GM23248 (cell line): ENCODE measurements at regions of chr5 and their contacts with region 1.

Region 1: GRCh38 chr5:31232273-31232888 is 38.9 kb downstream of the CDH6 start:
- DNase-seq: peak; percentile 83
- H3K4me3 ChIP-seq: no peak overlapping the region
- H3K27ac ChIP-seq: no peak overlapping the region
- H3K4me1 ChIP-seq: peaks cover 13% of the 10 kb centered on the region
- H3K27me3 ChIP-seq: no peaks in the 10 kb centered on the region

Region 2: GRCh38 chr5:30040488-30041118 is 1191.8 kb before region 1 on chr5:
- in situ Hi-C with region 1: loop called (anchors 25 kb)
- DNase-seq: peak; percentile 52
- H3K4me3 ChIP-seq: no peak overlapping the region
- H3K27ac ChIP-seq: no peak overlapping the region
- H3K4me1 ChIP-seq: no peaks in the 10 kb centered on the region
- H3K27me3 ChIP-seq: no peaks in the 10 kb centered on the region

Region 3: DNA sequence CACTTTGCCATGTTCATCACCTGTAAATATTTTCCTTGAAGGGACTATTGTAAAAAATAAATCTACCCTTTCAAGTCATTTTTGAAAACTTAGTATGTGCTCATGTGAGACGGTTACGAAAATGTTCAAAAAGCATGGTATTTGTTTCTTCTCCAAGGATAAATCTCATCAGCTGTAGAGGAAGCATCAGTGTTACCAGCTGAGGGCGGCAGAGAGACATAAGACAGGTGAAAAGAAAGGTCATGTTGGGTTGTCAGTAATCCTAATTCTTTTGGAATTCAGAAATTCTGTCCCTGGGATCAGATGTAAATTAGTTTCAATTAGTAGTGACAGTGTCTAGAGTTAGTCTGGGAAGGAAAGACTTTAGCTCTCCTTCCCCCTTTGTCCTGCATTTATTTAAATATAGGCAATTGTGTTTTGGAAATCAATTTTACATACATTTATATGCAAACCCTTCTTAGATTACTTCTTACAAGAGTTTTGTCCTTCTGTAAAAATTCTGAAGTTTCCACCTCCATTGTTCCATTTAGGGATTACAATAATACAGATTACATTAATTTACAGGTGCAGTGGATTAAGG is 830.8 kb before region 1 on chr5:
- in situ Hi-C with region 1: loop called (anchors 25 kb)
- DNase-seq: peak; percentile 68
- H3K4me3 ChIP-seq: no peak overlapping the region
- H3K27ac ChIP-seq: no peak overlapping the region
- H3K4me1 ChIP-seq: no peaks in the 10 kb centered on the region
- H3K27me3 ChIP-seq: no peaks in the 10 kb centered on the region

Region 4: GRCh38 chr5:30581198-30581935 is 651.0 kb before region 1 on chr5:
- in situ Hi-C with region 1: no loop called
- DNase-seq: no peak
- H3K4me3 ChIP-seq: no peak overlapping the region
- H3K27ac ChIP-seq: no peak overlapping the region
- H3K4me1 ChIP-seq: no peaks in the 10 kb centered on the region
- H3K27me3 ChIP-seq: no peaks in the 10 kb centered on the region